Gastrocnemius medialis (tissue), 4 donors: ENCODE measurements at regions of chr15 and their contacts with region 1.

Region 1: GRCh38 chr15:58770857-58771620 is at the start of gene MINDY2:
- DNase-seq: peak; percentile 97 to 98
- ATAC-seq: peak; percentile 91 to 92
- H3K4me3 ChIP-seq: peak within 1 kb of the TSS; percentile 70 to 97 (median 92)
- H3K27ac ChIP-seq: peak within 1 kb of the TSS; percentile 92 to 99 (median 98)
- H3K4me1 ChIP-seq: peaks cover 40 to 44% of the 10 kb centered on the region in 2 donors
- H3K27me3 ChIP-seq: no peaks in the 10 kb centered on the region
- CTCF ChIP-seq: peak in 1 of 5 experiments; percentile 19
- POLR2A ChIP-seq: peak; percentile 87 to 96
- total RNA-seq, gene MINDY2: 7.1 to 22.0 (median 9.8) TPM

Region 2: GRCh38 chr15:58227706-58228543 is 543.1 kb before region 1 on chr15:
- in situ Hi-C with region 1: loop called in 2 of 4 experiments (anchors 10 to 25 kb)
- intact Hi-C with region 1: loop called (anchors 2 kb)
- DNase-seq: peak; percentile 63 to 77
- ATAC-seq: peak; percentile 46 to 59
- H3K4me3 ChIP-seq: no peak overlapping the region
- H3K27ac ChIP-seq: peak overlapping the region; percentile 85 to 92 (median 86)
- H3K4me1 ChIP-seq: peaks cover 27 to 37% of the 10 kb centered on the region in 2 donors
- H3K27me3 ChIP-seq: no peaks in the 10 kb centered on the region
- CTCF ChIP-seq: peak; percentile 78 to 95 (median 87)
- POLR2A ChIP-seq: no peak

Region 3: DNA sequence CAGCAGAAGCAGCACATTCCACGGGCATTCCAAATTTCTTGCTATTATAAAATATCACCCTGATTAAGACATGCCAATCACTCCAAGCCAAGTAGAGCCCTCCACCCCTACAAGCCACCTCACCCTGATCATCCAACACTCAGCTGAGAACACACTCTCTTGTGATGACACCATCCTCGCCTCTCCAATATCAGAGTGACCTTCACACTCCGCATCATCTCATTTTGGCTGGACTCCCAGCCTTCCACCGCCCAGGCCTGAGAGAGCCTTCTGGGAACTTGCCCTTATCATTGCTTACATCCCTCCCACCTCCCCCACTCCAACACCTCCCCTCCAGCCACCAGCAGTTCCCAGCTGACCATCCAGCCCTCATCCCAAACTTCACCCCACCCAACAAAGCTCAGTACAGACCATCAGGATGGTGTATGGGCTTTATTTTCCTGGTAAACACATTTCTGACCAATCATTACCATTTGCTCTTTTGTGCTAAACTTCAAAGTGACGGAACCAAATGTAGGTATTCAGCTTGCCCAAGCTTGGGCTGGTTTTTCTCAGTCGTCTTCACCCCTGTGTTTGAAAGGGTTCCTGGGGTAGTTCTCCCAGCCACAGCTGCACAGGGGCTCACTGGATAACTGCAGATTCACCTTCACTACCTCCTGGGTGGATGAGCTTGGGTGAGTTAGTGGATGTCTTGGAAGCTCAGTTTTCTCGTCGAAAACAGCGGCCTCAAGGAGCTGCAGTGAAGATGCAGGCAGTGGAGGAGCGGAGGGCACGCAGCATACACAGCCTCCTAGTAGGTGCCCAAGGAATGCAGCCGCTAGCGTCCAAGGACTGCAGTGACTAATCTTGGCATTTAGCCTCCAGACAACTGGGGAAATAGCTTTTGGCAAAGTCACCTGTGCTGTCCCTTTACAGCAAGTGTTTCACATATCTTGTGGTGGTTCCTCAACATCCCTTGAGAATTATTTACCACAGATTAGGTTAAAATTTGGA is 224.1 kb before region 1 on chr15:
- in situ Hi-C with region 1: no loop called
- intact Hi-C with region 1: loop called (anchors 5 kb)
- DNase-seq: peak; percentile 73 to 85
- ATAC-seq: peak; percentile 96 to 97
- H3K4me3 ChIP-seq: no peak overlapping the region
- H3K27ac ChIP-seq: peak overlapping the region; percentile 47 to 67 (median 52)
- H3K4me1 ChIP-seq: peaks cover 22 to 36% of the 10 kb centered on the region in 2 donors
- H3K27me3 ChIP-seq: no peaks in the 10 kb centered on the region
- CTCF ChIP-seq: no peak
- POLR2A ChIP-seq: no peak

Region 4: DNA sequence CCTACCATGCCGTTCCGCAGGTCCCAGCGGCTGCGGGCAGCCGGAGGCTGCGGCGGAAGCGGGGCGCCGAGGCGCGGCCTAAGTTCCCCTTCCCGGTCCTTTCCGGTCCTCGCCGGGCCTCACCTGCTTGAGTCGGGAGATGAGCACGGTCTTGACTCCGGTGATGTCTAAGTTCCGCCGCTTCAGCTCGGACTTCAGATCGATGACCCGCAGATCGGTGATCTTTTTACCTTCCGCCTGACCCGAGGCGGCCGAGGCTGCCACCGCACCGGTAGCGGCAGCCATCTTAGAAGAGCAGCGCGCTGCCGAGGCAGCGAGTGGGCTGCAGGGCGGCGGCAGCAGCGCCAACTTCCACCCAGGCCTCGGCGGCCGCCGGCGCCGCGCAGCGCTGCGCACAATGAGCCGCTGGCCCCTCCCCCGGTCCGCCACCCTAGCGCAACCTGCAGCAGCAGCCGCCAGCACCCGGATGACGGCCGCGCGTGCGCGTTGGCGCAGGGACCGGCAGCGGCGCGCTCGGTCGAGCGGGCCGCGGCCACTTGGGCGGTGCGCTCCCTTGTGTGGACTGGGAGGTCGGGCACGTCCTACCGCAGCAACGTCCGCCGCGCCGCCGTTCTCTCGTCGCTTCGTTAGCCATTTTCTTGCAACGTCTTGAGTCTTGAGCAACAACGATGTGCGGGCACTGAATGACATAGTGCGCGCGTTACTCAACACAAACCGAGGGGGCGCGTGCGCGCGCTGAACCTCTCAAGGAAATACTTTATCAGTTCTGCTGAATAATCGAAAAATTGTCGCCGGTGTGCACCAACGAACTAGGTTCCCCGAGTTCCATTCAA is 162.5 kb after region 1 on chr15 and contains the start of gene SLTM:
- in situ Hi-C with region 1: no loop called
- intact Hi-C with region 1: loop called (anchors 1 kb)
- DNase-seq: peak; percentile 85 to 94
- ATAC-seq: peak; percentile 87
- H3K4me3 ChIP-seq: peak within 1 kb of the TSS; percentile 73 to 95 (median 76)
- H3K27ac ChIP-seq: peak within 1 kb of the TSS; percentile 93 to 99 (median 96)
- H3K4me1 ChIP-seq: peaks cover 13 to 26% of the 10 kb centered on the region in 2 donors
- H3K27me3 ChIP-seq: no peaks in the 10 kb centered on the region
- CTCF ChIP-seq: peak in 4 of 5 experiments; percentile 13 to 43 (median 37)
- POLR2A ChIP-seq: peak; percentile 94 to 97
- total RNA-seq, gene SLTM: 46.5 to 76.2 (median 60.9) TPM

Region 5: GRCh38 chr15:59174835-59175831 is 404.1 kb after region 1 on chr15:
- in situ Hi-C with region 1: no loop called
- intact Hi-C with region 1: no loop called
- DNase-seq: peak in 1 of 2 donors; percentile 39
- ATAC-seq: peak; percentile 45 to 74
- H3K4me3 ChIP-seq: no peak overlapping the region
- H3K27ac ChIP-seq: no peak overlapping the region
- H3K4me1 ChIP-seq: peaks cover 4 to 14% of the 10 kb centered on the region in 2 donors
- H3K27me3 ChIP-seq: no peaks in the 10 kb centered on the region
- CTCF ChIP-seq: peak; percentile 21 to 50 (median 47)
- POLR2A ChIP-seq: no peak

Region 6: DNA sequence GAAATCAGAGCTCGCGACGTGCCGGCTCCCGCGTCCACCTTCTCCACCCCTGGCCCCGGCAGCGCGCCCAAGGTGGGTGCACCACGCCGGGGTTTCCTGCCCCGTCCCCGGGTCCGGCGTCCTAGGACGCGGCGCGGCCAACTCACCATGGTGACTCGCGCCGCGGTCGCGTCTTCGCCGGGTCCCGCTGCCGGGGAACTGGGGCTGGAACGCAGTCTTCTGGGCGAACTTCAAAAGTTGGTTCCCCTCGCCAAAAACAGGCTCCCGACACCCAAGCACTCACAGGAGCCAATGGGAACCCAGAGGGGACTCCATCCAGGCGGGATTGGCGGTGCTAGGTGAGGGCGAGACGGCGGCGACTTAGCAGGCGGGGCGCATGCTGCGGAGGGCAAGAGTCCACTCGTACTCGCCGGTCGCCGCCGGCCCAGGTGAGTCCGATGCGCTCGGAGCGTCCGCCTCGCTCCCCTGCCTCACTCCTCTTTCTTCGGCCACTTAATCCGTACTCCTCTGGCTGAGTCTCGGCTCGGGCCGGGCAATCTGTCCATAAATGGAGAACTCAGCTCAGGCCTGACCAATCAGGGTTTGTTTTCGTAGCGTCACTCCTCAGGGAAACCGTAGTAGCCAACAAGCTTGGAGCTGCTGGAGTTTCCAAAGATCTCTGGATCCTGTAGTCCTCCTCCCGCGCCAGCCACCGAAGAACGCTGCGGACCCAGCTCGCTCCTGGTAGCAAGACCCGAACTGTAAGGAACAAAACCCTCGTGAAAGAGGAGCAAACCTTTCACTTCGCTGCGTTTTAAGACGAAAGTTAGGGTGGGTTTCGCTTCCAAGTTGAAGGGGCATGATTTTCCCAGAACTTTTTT is 601.5 kb after region 1 on chr15 and contains the start of gene MYO1E:
- in situ Hi-C with region 1: no loop called
- intact Hi-C with region 1: loop called (anchors 10 kb)
- DNase-seq: peak; percentile 91 to 95
- ATAC-seq: peak; percentile 98
- H3K4me3 ChIP-seq: peak within 1 kb of the TSS; percentile 76 to 94 (median 88)
- H3K27ac ChIP-seq: peak within 1 kb of the TSS; percentile 93 to 97 (median 97)
- H3K4me1 ChIP-seq: peaks cover 6 to 15% of the 10 kb centered on the region in 2 donors
- H3K27me3 ChIP-seq: no peaks in the 10 kb centered on the region
- CTCF ChIP-seq: no peak
- POLR2A ChIP-seq: peak; percentile 88 to 98
- total RNA-seq, gene MYO1E: 12.8 to 39.6 (median 30.7) TPM